Activated T-helper 2 cell treated with anti-CD3 and anti-CD28 coated beads, Interferon-gamma antibody, Interleukin-2, Interleukin-4, amounts not matched to agents 10 μg/mL and 5 μg/mL and 100 μg/mL, durations not matched to agents 14 hours and 24 hours and 36 hours (primary cell): ENCODE measurements at regions of chr2 and their contacts with region 1.

Region 1: GRCh38 chr2:161992526-161992925 is 81.5 kb downstream of the DPP4 start:
- DNase-seq: peak; percentile 61
- H3K4me3 Mint-ChIP-seq: peak overlapping the region; percentile 76
- H3K27ac Mint-ChIP-seq: peak overlapping the region; percentile 95
- H3K4me1 Mint-ChIP-seq: peaks cover 68% of the 10 kb centered on the region
- H3K27me3 Mint-ChIP-seq: no peaks in the 10 kb centered on the region

Region 2: DNA sequence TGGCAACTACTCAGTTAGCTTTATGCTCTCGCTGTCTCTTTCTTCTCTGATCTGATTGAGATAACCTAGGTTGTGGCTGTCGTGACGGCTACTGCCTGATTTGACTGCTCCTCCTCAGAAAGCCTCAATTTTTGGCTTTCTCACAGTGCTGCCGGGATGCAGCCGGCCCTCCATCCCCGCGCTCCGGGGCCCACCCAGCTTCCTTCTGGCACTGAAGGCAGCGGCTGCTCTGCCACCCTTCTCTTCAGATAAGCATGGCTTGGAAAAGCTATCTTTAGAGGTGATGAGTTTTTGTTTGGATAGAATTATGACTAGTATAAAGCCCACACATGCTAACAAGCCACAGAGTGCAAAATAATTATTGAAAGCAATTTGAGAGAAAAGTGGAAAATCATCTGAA is 21.0 kb before region 1 on chr2:
- intact Hi-C with region 1: no loop called
- DNase-seq: no peak
- H3K4me3 Mint-ChIP-seq: no peak overlapping the region
- H3K27ac Mint-ChIP-seq: no peak overlapping the region
- H3K4me1 Mint-ChIP-seq: peaks cover 60% of the 10 kb centered on the region
- H3K27me3 Mint-ChIP-seq: no peaks in the 10 kb centered on the region

Region 3: GRCh38 chr2:161981679-161982250 is 10.8 kb before region 1 on chr2:
- intact Hi-C with region 1: loop called (anchors 1 kb)
- DNase-seq: no peak
- H3K4me3 Mint-ChIP-seq: no peak overlapping the region
- H3K27ac Mint-ChIP-seq: peak overlapping the region; percentile 71
- H3K4me1 Mint-ChIP-seq: peaks cover 53% of the 10 kb centered on the region
- H3K27me3 Mint-ChIP-seq: no peaks in the 10 kb centered on the region

Region 4: DNA sequence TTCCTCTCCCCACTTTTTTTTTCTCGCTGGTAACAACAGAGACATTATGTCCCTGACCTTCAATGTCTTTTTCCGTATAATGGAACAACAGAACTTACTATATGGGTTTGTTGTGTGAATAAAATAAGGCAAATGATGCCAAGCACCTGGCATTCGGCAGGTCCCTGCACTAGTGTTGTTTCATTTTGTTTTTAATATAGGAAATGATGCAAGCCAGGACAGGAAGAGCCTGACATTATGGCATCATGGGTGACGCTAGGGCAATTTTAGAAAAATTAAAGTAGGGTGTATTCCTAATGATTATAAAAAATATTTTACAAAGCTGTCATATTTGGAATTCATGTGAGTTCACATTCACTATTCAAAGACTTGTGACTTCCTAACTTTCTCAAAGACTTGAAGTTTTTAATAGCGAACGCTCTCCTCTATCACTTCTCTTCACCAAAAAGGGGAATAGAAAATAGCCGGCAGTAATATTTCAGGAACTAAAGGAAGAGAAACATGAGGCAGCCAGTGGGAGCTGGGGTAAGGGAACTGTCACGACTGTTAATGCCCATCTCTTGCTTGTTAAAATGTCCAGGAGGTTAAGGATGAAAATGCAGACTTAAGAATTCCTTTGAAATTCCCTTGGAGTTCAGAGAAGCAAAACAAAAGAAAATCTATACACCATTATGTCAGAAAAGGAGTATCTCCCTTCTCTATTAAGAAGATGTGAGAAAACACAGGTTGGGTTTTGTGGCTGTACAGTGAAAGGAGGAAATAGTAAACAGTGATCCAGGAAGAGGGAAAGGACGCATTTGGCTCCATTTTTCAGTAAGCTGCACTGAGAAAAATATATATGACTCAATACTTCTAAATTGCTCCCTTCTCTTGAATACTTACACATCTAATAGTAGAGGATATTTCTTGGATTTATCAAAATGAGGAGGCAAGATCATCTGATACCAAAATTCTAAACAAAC is 21.3 kb after region 1 on chr2:
- intact Hi-C with region 1: loop called (anchors 1 kb)
- DNase-seq: no peak
- H3K4me3 Mint-ChIP-seq: peak overlapping the region; percentile 79
- H3K27ac Mint-ChIP-seq: peak overlapping the region; percentile 87
- H3K4me1 Mint-ChIP-seq: peaks cover 67% of the 10 kb centered on the region
- H3K27me3 Mint-ChIP-seq: no peaks in the 10 kb centered on the region

Region 5: DNA sequence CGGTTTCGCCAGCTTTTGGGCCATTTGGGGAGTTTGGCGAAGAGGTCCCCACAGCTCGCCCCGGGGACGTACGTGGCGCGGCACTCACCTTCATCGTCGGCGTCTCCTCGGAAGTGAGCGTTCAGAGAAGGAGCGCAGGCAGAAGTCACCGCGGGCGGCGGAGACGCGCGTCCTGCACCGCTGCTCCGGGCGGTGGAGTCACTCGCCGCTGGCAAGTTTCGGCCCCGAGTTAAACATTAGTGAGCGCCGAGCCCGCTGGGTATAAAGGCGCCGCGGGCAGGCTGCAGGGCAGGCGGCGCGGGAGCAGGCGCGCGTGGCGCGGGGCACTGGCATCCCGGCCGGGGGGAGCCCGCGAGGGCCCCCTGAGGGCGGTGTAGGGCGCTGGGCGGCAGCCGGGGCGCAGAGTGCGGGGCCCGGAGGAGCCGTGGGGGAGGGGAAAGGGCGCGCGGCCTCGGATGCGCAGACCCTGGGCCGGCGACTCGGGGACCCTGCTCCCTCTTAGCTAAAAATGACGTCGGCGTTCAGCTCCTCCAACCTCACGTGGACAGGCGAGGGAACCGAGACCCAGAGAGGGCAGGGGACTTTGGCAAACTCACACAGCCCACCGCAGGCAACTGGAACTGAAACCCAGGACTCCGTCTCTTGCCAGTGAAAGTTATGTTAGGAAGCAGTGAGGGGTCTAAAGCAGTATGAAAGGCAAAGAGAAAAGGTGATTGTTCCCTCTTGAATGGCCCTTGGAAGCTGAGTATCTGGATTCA is 81.5 kb after region 1 on chr2 and contains the start of gene DPP4:
- intact Hi-C with region 1: loop called (anchors 5 kb)
- DNase-seq: peak; percentile 46
- H3K4me3 Mint-ChIP-seq: peak within 1 kb of the TSS; percentile 87
- H3K27ac Mint-ChIP-seq: peak within 1 kb of the TSS; percentile 74
- H3K4me1 Mint-ChIP-seq: peaks cover 48% of the 10 kb centered on the region
- H3K27me3 Mint-ChIP-seq: no peaks in the 10 kb centered on the region
- total RNA-seq, gene DPP4: 65.8 and 67.0 TPM in 2 replicates

Region 6: DNA sequence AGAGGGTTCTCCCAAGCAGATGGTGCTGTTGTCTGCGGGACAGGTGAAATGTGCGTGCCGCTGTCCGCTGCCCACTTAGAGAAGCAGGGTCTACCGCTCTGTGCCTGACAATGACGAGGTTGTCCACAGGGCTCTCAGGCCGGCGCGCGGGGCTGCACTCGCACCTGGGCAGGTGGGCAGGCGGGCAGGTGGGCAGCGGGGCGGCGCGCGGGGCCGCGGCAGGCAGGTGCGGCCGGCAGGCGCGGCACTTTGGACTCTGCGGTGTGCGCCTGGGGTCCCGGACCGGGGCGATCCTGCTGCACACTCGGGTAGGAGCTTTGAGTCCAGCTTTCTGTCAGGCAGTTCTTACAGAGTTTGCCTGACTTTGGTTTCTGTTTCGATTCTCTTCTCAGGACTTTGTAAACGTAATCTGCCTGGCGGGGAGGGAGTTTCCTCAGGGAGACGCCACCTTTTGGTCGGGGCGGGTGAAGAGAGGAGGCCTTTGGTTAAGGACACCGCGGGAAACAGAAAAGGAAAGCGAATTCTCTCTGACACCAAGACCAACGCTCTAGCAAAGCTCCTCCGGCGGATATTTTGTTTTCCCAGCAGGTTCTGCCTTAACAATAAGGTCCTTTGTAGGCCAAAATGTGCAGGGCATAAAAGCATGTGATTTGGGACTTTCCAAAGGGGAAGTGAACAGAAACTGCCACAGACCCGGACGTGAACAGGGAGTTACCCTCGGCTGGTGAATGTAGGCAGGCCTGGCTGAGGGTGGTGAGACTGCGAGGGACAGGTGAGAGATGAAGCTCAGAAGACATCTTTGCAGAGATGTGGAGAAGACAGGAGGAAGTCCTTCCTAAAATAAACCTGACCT is 326.0 kb after region 1 on chr2 and contains the start of gene IFIH1:
- intact Hi-C with region 1: loop called (anchors 10 kb)
- DNase-seq: peak; percentile 76
- H3K4me3 Mint-ChIP-seq: peak within 1 kb of the TSS; percentile 91
- H3K27ac Mint-ChIP-seq: peak within 1 kb of the TSS; percentile 96
- H3K4me1 Mint-ChIP-seq: peaks cover 51% of the 10 kb centered on the region
- H3K27me3 Mint-ChIP-seq: no peaks in the 10 kb centered on the region
- total RNA-seq, gene IFIH1: 14.5 and 16.1 TPM in 2 replicates

Region 7: DNA sequence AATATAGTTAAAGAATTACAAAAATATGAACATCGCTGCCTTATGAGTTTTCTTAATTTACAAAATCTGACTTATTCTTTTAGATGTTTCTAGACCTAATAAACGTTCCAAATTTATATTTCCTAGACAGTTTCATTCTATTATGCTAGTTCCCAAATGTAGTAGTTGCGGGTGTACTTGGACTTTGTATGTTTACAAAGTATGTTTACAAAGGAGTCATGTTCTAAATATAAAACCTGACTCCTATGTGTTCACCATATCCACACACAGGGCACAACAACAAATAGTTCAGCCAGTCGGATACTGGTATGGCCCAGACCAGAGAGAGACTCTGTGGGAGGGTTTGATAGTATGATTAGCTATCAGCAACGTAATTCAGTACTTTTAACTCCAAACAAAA is 615.4 kb after region 1 on chr2:
- intact Hi-C with region 1: no loop called
- DNase-seq: no peak
- H3K4me3 Mint-ChIP-seq: no peak overlapping the region
- H3K27ac Mint-ChIP-seq: no peak overlapping the region
- H3K4me1 Mint-ChIP-seq: no peaks in the 10 kb centered on the region
- H3K27me3 Mint-ChIP-seq: no peaks in the 10 kb centered on the region